CD4-positive, alpha-beta T cell (primary cell): ENCODE measurements at regions of chr10 and their contacts with region 1.

Region 1: DNA sequence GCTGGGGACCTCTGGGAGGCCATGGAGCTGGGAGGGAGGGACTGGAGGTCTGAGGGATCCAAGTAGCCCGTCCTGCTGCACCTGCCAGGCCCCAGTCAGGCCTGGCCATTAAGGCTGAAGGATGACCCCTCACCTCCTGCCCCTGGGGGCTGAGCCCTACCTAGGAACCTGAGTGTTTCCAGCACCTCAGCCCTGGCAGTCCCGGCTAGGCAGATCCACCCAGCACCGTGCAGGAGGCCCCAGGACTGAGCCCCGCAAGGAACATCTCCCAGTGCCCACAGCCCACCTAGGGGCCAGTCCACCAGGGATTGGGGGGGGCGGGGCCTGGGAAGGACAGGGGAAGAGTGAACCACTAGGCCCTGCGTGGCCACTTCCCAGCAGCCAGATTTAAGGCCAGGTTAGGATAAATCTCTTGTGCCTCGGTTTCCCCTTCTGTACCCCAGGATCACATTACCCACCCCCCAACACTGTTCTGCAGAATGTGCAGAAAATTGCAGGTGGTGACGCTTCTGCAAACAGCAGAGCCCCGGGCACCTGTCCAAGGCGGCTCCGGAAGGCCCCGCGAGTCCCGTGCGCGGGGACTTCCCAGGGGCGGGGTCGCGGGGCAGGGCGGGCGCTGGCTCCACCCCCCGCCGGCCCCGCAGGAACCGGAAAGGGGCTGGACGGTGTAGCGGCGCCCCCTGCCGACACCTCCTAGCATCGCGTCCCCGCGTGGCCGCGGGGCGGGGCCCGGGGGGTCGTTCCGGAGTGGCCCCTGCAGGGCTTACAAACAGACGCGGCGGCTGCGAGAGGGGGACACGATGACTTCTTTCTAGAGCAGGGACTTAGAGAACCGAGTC is 55.9 kb downstream of the PWWP2B start:
- DNase-seq: peak; percentile 87 to 97 (median 92)
- ATAC-seq: peak; percentile 93
- H3K4me3 ChIP-seq: peak overlapping the region; percentile 33
- H3K4me3 Mint-ChIP-seq: peak overlapping the region; percentile 42
- H3K27ac ChIP-seq: peak overlapping the region; percentile 79 to 82
- H3K27ac Mint-ChIP-seq: peak overlapping the region; percentile 89
- H3K4me1 ChIP-seq: peaks cover 39% of the 10 kb centered on the region
- H3K4me1 Mint-ChIP-seq: peaks cover 34% of the 10 kb centered on the region
- H3K27me3 ChIP-seq: no peaks in the 10 kb centered on the region
- H3K27me3 Mint-ChIP-seq: no peaks in the 10 kb centered on the region
- CTCF ChIP-seq: peak; percentile 92

Region 2: DNA sequence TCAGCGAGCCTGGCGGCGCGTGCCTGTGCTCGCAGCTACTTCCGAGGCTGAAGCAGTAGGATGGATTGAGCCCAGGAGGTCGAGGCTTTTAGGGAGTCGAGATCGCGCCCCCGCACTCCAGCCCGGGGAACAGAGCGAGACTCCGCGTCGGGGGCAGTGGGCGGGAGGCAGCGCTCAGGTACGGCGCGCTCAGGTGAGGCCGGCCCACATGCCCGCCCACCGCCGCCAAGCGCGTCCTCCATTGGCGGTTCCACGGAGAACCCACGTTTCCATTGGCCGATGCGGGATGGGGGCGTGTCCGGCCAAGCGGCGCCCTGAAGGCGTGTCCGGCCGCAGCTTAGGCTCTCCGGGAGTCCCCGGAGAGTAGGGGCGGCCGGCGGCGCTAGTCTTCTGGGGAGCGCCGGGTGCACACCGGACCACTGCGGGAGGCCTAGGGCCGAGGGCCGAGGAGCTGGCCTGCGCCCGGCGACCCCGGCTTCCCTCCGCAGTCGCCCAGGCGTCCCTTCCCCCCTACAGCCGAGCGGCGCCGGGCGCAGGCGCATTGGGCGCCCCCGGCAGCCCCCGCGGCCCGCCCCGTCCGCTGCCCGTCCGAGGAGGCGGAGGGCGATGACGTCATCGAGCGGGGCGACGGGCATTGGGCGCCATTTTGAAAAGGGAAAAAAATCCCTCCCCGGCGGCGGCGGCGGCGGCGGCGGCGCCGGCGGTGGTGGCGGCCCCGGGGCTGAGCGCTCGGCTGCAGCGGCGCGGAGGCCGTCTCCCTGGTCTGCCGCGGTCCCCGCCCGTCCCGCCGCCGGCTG is 552.3 kb before region 1 on chr10 and contains the start of gene PPP2R2D:
- CTCF ChIA-PET with region 1: no interaction called
- POLR2A ChIA-PET with region 1: no interaction called
- intact Hi-C with region 1: loop called in 1 of 2 experiments (anchors 5 kb)
- DNase-seq: peak; percentile 89 to 98 (median 95)
- ATAC-seq: peak; percentile 81
- H3K4me3 ChIP-seq: peak within 1 kb of the TSS; percentile 73
- H3K4me3 Mint-ChIP-seq: peak within 1 kb of the TSS; percentile 97
- H3K27ac ChIP-seq: peak within 1 kb of the TSS; percentile 66 to 82
- H3K27ac Mint-ChIP-seq: peak within 1 kb of the TSS; percentile 96
- H3K4me1 ChIP-seq: peaks cover 65% of the 10 kb centered on the region
- H3K4me1 Mint-ChIP-seq: peaks cover 61% of the 10 kb centered on the region
- H3K27me3 ChIP-seq: no peaks in the 10 kb centered on the region
- H3K27me3 Mint-ChIP-seq: no peaks in the 10 kb centered on the region
- CTCF ChIP-seq: no peak
- total RNA-seq, gene PPP2R2D: 32.6 to 32.9 TPM

Region 3: GRCh38 chr10:132158122-132158741 is 294.6 kb before region 1 on chr10:
- CTCF ChIA-PET with region 1: no interaction called
- POLR2A ChIA-PET with region 1: no interaction called
- intact Hi-C with region 1: loop called in 1 of 2 experiments (anchors 10 kb)
- DNase-seq: peak in 8 of 14 experiments; percentile 23 to 81 (median 52)
- ATAC-seq: peak; percentile 42
- H3K4me3 ChIP-seq: no peak overlapping the region
- H3K4me3 Mint-ChIP-seq: no peak overlapping the region
- H3K27ac ChIP-seq: peak overlapping the region in 1 of 2 donors; percentile 87
- H3K27ac Mint-ChIP-seq: peak overlapping the region; percentile 88
- H3K4me1 ChIP-seq: peaks cover 37% of the 10 kb centered on the region
- H3K4me1 Mint-ChIP-seq: peaks cover 25% of the 10 kb centered on the region
- H3K27me3 ChIP-seq: no peaks in the 10 kb centered on the region
- H3K27me3 Mint-ChIP-seq: no peaks in the 10 kb centered on the region
- CTCF ChIP-seq: no peak

Region 4: DNA sequence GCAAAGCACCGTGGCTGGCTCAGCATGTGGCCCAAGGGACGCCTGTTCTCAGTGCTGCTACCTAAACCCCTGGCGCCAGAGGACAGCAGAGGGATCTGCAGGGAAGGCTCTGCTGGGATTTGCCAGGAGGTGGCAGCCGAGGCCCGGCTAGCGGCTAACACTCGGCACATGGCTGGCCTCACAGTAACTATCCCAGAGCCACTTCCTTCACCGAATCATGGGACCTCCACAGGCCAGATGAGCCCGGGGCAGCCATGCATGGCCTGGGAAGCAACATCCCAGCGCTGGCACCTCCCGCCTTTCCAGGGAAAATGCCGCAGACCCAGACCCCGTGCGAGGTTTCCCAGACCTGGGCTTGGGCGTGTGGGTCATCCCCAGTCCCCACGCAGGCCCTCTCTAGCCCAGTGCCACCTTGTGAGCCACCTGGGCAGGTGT is 229.7 kb before region 1 on chr10:
- CTCF ChIA-PET with region 1: no interaction called
- POLR2A ChIA-PET with region 1: no interaction called
- intact Hi-C with region 1: loop called (anchors 1 kb)
- DNase-seq: peak; percentile 44 to 81 (median 58)
- ATAC-seq: peak; percentile 96
- H3K4me3 ChIP-seq: no peak overlapping the region
- H3K4me3 Mint-ChIP-seq: no peak overlapping the region
- H3K27ac ChIP-seq: no peak overlapping the region
- H3K27ac Mint-ChIP-seq: no peak overlapping the region
- H3K4me1 ChIP-seq: peaks cover 10% of the 10 kb centered on the region
- H3K4me1 Mint-ChIP-seq: peaks cover 4% of the 10 kb centered on the region
- H3K27me3 ChIP-seq: no peaks in the 10 kb centered on the region
- H3K27me3 Mint-ChIP-seq: no peaks in the 10 kb centered on the region
- CTCF ChIP-seq: peak; percentile 69

Region 5: GRCh38 chr10:132387764-132388210 is 65.1 kb before region 1 on chr10:
- CTCF ChIA-PET with region 1: no interaction called
- POLR2A ChIA-PET with region 1: interaction called, 5 read pairs
- intact Hi-C with region 1: loop called (anchors 1 kb)
- DNase-seq: peak; percentile 68 to 89 (median 77)
- ATAC-seq: peak; percentile 96
- H3K4me3 ChIP-seq: peak overlapping the region; percentile 22
- H3K4me3 Mint-ChIP-seq: peak overlapping the region; percentile 25
- H3K27ac ChIP-seq: no peak overlapping the region
- H3K27ac Mint-ChIP-seq: peak overlapping the region; percentile 71
- H3K4me1 ChIP-seq: peaks cover 20% of the 10 kb centered on the region
- H3K4me1 Mint-ChIP-seq: no peaks in the 10 kb centered on the region
- H3K27me3 ChIP-seq: no peaks in the 10 kb centered on the region
- H3K27me3 Mint-ChIP-seq: no peaks in the 10 kb centered on the region
- CTCF ChIP-seq: peak; percentile 44

Region 6: GRCh38 chr10:132396495-132397035 is 56.3 kb before region 1 on chr10:
- CTCF ChIA-PET with region 1: no interaction called
- POLR2A ChIA-PET with region 1: interaction called, 25 read pairs
- intact Hi-C with region 1: loop called in 1 of 2 experiments (anchors 2 kb)
- DNase-seq: peak; percentile 45 to 89 (median 66)
- ATAC-seq: peak; percentile 77
- H3K4me3 ChIP-seq: peak overlapping the region; percentile 38
- H3K4me3 Mint-ChIP-seq: no peak overlapping the region
- H3K27ac ChIP-seq: no peak overlapping the region
- H3K27ac Mint-ChIP-seq: no peak overlapping the region
- H3K4me1 ChIP-seq: peaks cover 41% of the 10 kb centered on the region
- H3K4me1 Mint-ChIP-seq: peaks cover 24% of the 10 kb centered on the region
- H3K27me3 ChIP-seq: no peaks in the 10 kb centered on the region
- H3K27me3 Mint-ChIP-seq: no peaks in the 10 kb centered on the region
- CTCF ChIP-seq: no peak